Left colon (tissue), 2 donors: ENCODE measurements at regions of chr10 and their contacts with region 1.

Region 1: DNA sequence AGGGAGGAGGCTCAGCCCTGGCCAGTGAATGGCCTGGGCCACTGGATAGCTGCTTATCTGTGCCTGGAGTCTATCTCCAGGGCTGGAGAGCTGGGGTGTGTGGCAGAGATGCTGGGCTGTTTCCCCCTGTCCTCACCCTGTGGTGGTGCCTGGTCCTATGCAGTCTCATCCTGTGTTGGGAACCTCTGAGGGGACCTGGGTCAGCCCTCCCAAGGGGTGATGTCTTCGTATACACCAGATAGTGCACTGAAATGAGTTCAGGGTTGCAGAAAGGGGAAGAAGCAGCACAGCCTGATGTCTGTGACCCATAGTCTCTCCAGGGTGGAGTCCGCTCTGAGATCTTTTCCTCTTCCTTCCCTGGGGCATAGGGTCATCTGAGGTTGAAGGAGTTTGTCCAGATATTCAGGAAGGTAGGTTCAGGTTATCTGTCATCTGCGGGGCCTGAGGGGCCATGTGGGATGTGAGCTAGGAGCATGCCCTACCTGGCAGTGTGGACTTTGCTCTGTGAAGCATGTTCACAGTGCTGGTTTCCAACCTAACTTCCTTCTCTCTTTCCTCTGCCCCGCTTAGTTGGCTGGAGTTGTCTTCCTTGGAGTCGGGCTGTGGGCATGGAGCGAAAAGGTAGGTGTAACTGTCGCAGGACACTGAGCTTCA is 33.4 kb upstream of the SH2D4B start:
- DNase-seq: peak; percentile 50 to 59
- ATAC-seq: peak; percentile 80

Region 2: DNA sequence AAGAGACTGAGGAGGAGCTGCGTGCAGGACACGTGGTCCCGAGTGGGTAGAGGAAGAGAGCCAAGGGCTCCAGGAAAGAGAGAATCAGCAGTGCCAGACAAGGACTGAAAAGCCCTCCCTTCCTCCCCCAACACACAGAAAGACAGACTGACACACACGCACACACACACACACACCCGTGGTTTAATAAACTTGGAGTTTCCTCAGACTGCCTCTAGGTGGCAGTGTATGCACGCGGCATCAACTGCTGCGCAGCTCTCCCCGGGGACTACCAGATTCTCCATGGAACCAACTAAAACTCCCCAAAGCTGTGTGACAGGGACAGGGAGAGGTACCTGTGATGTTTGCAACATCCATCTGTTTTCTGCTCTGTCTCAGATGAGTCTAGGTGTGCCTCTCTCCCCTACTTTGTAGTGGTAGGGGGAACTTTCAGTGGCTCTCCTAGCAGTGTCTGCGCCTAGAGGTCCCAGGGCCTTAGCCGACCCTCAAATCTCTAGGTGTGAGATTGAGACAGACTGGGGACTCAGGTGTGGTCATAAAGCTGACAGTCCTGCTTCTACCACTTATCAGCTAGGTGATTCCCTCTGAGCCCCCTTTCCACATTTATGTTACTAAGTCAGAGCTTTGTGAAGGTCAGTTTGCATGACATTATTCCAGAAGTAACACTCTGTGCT is 59.5 kb before region 1 on chr10:
- intact Hi-C with region 1: loop called in 1 of 2 experiments (anchors 2 kb)
- DNase-seq: peak; percentile 61 to 63
- ATAC-seq: peak; percentile 95

Region 3: DNA sequence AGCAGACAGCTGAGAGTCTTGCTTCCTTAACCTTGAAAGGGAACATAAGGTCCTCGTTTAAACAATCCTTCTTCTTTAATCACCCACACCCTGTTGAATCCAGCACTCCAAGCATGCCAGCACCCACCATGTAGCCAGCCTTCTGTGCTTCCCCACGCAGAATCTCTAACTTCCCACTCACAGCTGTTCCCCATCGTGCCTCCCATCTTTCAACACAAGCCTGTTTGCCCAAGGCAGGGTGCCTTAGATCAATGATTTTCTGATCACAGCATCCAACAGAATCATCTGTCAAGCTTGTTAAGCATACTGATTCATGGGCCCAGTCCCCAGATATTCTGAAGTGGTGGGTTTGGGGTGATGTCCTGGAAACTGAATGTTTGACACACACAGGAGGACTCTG is 564.2 kb after region 1 on chr10:
- intact Hi-C with region 1: no loop called
- DNase-seq: no peak
- ATAC-seq: no peak